Natural killer cell (primary cell): ENCODE measurements at regions of chr22 and their contacts with region 1.

Region 1: GRCh38 chr22:35648066-35649025 is at the start of gene APOL6:
- DNase-seq: peak; percentile 63 to 85
- ATAC-seq: peak; percentile 72 to 84 (median 78)
- H3K4me3 ChIP-seq: peak within 1 kb of the TSS; percentile 95
- H3K4me3 Mint-ChIP-seq: peak within 1 kb of the TSS; percentile 100
- H3K27ac ChIP-seq: peak within 1 kb of the TSS; percentile 99
- H3K27ac Mint-ChIP-seq: peak within 1 kb of the TSS; percentile 100
- H3K4me1 ChIP-seq: peaks cover 36% of the 10 kb centered on the region
- H3K4me1 Mint-ChIP-seq: peaks cover 42 to 45% of the 10 kb centered on the region in 2 donors
- H3K27me3 ChIP-seq: no peaks in the 10 kb centered on the region
- H3K27me3 Mint-ChIP-seq: no peaks in the 10 kb centered on the region
- CTCF ChIP-seq: no peak
- total RNA-seq, gene APOL6: 116 to 138 (median 122) TPM

Region 2: GRCh38 chr22:35660291-35661127 is 12.2 kb after region 1 on chr22:
- intact Hi-C with region 1: loop called (anchors 1 kb)
- DNase-seq: peak; percentile 58 to 87
- ATAC-seq: peak; percentile 77 to 92 (median 85)
- H3K4me3 ChIP-seq: no peak overlapping the region
- H3K4me3 Mint-ChIP-seq: peak overlapping the region; percentile 88
- H3K27ac ChIP-seq: peak overlapping the region; percentile 98
- H3K27ac Mint-ChIP-seq: peak overlapping the region; percentile 96 to 100
- H3K4me1 ChIP-seq: peaks cover 32% of the 10 kb centered on the region
- H3K4me1 Mint-ChIP-seq: peaks cover 79 to 81% of the 10 kb centered on the region in 2 donors
- H3K27me3 ChIP-seq: no peaks in the 10 kb centered on the region
- H3K27me3 Mint-ChIP-seq: no peaks in the 10 kb centered on the region
- CTCF ChIP-seq: no peak

Region 3: DNA sequence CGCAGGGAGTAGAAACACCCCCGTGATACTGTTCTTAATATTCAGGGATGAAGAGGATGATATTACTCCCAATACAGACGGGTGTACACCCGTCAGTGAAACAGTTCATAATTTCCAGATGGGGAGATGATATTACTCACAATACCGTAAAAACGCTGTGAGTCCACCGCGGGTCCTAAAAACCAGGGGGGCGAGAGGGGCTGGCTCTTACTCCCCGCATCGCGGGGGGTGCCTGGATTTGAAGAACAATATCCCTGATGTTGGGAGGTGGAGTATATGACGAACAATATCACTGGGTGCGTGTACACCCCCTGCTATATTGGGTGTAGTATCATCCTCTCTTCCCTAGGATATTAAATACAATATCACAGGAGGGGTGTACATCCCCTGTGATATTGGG is 48.8 kb after region 1 on chr22:
- intact Hi-C with region 1: loop called (anchors 5 kb)
- DNase-seq: no peak
- ATAC-seq: no peak
- H3K4me3 ChIP-seq: no peak overlapping the region
- H3K4me3 Mint-ChIP-seq: no peak overlapping the region
- H3K27ac ChIP-seq: no peak overlapping the region
- H3K27ac Mint-ChIP-seq: no peak overlapping the region
- H3K4me1 ChIP-seq: no peaks in the 10 kb centered on the region
- H3K4me1 Mint-ChIP-seq: no peaks in the 10 kb centered on the region
- H3K27me3 ChIP-seq: no peaks in the 10 kb centered on the region
- H3K27me3 Mint-ChIP-seq: no peaks in the 10 kb centered on the region
- CTCF ChIP-seq: no peak

Region 4: DNA sequence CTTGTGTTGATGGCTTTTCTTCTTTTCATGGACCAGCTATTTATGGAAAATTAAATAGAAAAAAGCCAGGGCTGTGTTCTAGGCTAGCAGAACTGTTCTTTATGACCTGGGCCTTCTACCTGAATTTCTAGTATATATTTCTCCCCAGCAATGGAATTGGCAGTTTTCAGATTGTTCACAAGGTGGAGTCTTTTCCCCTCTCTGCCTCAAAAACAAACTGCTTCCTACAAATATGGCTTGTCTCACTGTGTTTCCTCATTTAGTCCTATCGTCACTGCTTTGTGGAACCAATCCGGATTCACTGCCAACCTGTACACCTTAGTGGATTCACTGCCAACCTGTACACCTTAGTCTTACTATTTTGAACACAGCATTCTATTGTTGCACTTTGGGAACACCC is 64.3 kb after region 1 on chr22:
- intact Hi-C with region 1: no loop called
- DNase-seq: no peak
- ATAC-seq: no peak
- H3K4me3 ChIP-seq: no peak overlapping the region
- H3K4me3 Mint-ChIP-seq: no peak overlapping the region
- H3K27ac ChIP-seq: no peak overlapping the region
- H3K27ac Mint-ChIP-seq: no peak overlapping the region
- H3K4me1 ChIP-seq: no peaks in the 10 kb centered on the region
- H3K4me1 Mint-ChIP-seq: no peaks in the 10 kb centered on the region
- H3K27me3 ChIP-seq: no peaks in the 10 kb centered on the region
- H3K27me3 Mint-ChIP-seq: peaks cover 0 to 6% of the 10 kb centered on the region in 2 donors
- CTCF ChIP-seq: no peak

Region 5: DNA sequence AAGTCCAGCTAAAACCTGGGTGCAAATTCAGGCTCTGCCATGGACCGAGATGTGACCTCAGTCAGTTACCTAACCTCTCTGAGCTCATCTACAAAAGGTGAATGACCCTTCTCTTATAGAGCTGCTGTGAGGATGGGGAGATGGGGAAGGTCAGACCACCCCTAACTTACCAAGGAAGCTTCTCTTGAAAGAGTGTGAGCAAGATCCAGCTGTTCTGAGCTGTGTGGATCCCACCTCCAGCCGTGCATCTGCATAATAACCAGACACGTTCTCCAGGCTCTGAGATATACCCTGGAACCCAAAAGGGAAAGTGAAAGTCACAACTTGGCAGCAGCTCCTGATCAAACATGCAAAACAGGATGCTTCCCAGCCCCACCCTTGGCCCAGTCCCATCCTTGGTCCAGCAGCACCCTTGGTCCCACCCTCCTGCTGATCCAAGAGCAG is 512.2 kb after region 1 on chr22 and contains the start of gene APOL3:
- intact Hi-C with region 1: loop called (anchors 5 kb)
- DNase-seq: peak; percentile 49 to 83
- ATAC-seq: peak; percentile 32 to 55 (median 40)
- H3K4me3 ChIP-seq: peak within 1 kb of the TSS; percentile 74
- H3K4me3 Mint-ChIP-seq: peak within 1 kb of the TSS; percentile 95
- H3K27ac ChIP-seq: peak within 1 kb of the TSS; percentile 96
- H3K27ac Mint-ChIP-seq: peak within 1 kb of the TSS; percentile 99 to 100
- H3K4me1 ChIP-seq: peaks cover 79% of the 10 kb centered on the region
- H3K4me1 Mint-ChIP-seq: peaks cover 77 to 81% of the 10 kb centered on the region in 2 donors
- H3K27me3 ChIP-seq: no peaks in the 10 kb centered on the region
- H3K27me3 Mint-ChIP-seq: no peaks in the 10 kb centered on the region
- CTCF ChIP-seq: no peak
- total RNA-seq, gene APOL3: 105 to 166 (median 111) TPM